ENCODE measurements at regions of chr12 and their contacts with region 1.

Region 1: DNA sequence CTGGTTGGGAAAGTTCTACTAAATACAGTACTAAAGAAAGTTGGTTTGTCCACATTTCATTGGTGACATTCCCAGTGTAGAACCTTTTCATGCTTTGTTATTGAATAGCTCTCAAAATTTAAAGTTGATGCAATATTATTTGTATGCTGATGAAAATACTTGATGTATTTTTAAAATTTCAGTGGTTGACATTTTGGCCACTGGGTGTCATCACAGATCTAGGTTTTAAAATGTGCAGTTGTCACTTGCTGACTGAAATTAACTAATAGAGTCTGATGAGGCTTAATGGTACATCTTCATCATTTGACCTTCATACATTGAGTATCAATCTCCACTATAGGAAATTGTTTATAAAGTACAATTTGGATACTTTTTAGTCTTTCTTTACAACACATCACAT is 37.1 kb downstream of the CMAS start:
- DNase-seq: peak in 1 of 2 experiments; percentile 17
- H3K4me3 ChIP-seq: no peak overlapping the region
- H3K27ac ChIP-seq: no peak overlapping the region
- H3K4me1 ChIP-seq: no peaks in the 10 kb centered on the region
- H3K27me3 ChIP-seq: no peaks in the 10 kb centered on the region
- CTCF ChIP-seq: peak; percentile 80

Region 2: GRCh38 chr12:22034709-22035506 is 48.3 kb before region 1 on chr12:
- CTCF ChIA-PET with region 1: no interaction called
- POLR2A ChIA-PET with region 1: no interaction called
- intact Hi-C with region 1: no loop called
- DNase-seq: no peak
- H3K4me3 ChIP-seq: no peak overlapping the region
- H3K27ac ChIP-seq: no peak overlapping the region
- H3K4me1 ChIP-seq: peaks cover 13% of the 10 kb centered on the region; the same call in 1 of the 2 replicates
- H3K27me3 ChIP-seq: no peaks in the 10 kb centered on the region
- CTCF ChIP-seq: no peak

Region 3: DNA sequence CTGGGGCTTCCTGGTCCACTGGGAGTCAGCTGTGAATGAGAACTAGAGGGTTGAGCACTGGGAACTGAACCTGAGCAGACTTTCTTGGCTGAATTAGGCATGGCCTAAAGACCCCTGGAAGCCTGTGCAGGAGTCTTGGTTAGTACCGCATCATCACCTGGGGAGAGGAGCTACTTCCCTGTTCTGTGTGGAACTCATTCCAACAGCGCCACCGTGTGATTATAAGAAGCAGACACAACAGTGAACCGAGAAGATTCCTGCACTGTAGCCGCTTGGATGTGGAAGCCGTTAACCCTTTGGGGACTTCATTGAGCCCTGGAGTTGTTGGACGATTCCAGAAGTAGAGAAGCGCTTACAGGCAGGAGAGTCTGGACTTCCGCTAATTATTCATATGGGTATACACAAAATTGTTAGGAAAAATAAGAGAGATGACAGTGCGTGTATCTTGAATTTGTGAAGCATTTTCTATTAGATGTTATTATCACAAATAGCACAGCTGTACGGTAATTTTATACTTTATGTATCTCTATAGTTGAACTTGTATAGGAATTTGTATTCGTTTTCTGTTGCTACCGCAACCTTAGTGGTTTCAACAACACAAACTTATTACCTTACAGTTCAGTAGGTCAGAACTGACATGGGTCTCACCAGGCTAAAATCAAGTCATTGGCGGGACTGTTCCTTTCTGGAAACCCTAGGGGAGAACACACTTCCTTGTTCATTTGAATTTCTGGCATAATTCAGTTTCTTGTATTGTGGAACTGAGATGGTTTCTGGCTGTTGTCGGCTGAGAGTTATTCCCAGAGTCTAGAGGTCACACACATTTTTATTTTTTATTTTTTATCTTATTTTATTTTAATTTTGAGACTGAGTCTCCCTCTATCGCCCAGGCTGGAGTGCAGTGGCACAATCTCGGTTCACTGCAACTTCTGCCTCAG is 360.5 kb after region 1 on chr12:
- CTCF ChIA-PET with region 1: interaction called, 14 read pairs
- POLR2A ChIA-PET with region 1: no interaction called
- intact Hi-C with region 1: loop called (anchors 1 kb)
- DNase-seq: peak; percentile 57 to 75
- H3K4me3 ChIP-seq: no peak overlapping the region
- H3K27ac ChIP-seq: no peak overlapping the region
- H3K4me1 ChIP-seq: no peaks in the 10 kb centered on the region; the same call in 1 of the 2 replicates
- H3K27me3 ChIP-seq: no peaks in the 10 kb centered on the region
- CTCF ChIP-seq: peak; percentile 87

Region 4: GRCh38 chr12:22459838-22460490 is 376.8 kb after region 1 on chr12:
- CTCF ChIA-PET with region 1: interaction called, 7 read pairs
- POLR2A ChIA-PET with region 1: no interaction called
- intact Hi-C with region 1: loop called (anchors 1 kb)
- DNase-seq: no peak
- H3K4me3 ChIP-seq: no peak overlapping the region
- H3K27ac ChIP-seq: no peak overlapping the region
- H3K4me1 ChIP-seq: no peaks in the 10 kb centered on the region
- H3K27me3 ChIP-seq: no peaks in the 10 kb centered on the region
- CTCF ChIP-seq: peak; percentile 71

Region 5: GRCh38 chr12:22662356-22662755 is 579.2 kb after region 1 on chr12:
- CTCF ChIA-PET with region 1: interaction called, 10 read pairs
- POLR2A ChIA-PET with region 1: no interaction called
- intact Hi-C with region 1: no loop called
- DNase-seq: no peak
- H3K4me3 ChIP-seq: no peak overlapping the region
- H3K27ac ChIP-seq: no peak overlapping the region
- H3K4me1 ChIP-seq: no peaks in the 10 kb centered on the region
- H3K27me3 ChIP-seq: no peaks in the 10 kb centered on the region
- CTCF ChIP-seq: no peak

Region 6: DNA sequence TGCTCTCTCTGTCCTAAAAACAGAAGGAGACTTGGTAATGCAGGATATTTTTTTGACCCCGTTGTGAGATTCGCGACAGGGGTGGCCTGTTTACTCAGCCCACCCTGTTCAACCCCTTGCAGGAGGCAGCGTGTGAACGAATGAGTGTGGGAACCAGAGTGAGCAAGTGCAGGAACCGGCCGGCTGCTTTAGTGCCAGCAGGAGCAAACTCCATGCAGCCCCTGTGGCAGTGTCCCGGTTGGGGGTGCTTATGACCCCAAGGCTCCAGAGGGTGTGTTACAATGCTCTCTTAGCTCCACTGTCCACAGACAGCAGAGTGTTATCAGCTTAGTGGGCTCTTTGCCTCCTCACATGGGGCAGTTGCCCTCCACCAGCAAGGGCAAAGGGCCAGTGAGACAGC is 767.0 kb after region 1 on chr12:
- CTCF ChIA-PET with region 1: no interaction called
- POLR2A ChIA-PET with region 1: no interaction called
- intact Hi-C with region 1: no loop called
- DNase-seq: no peak
- H3K4me3 ChIP-seq: no peak overlapping the region
- H3K27ac ChIP-seq: no peak overlapping the region
- H3K4me1 ChIP-seq: no peaks in the 10 kb centered on the region
- H3K27me3 ChIP-seq: no peaks in the 10 kb centered on the region
- CTCF ChIP-seq: no peak

Measured in PC-9 (cell line).